ENCODE measurements at regions of chr14 and their contacts with region 1.

Region 1: DNA sequence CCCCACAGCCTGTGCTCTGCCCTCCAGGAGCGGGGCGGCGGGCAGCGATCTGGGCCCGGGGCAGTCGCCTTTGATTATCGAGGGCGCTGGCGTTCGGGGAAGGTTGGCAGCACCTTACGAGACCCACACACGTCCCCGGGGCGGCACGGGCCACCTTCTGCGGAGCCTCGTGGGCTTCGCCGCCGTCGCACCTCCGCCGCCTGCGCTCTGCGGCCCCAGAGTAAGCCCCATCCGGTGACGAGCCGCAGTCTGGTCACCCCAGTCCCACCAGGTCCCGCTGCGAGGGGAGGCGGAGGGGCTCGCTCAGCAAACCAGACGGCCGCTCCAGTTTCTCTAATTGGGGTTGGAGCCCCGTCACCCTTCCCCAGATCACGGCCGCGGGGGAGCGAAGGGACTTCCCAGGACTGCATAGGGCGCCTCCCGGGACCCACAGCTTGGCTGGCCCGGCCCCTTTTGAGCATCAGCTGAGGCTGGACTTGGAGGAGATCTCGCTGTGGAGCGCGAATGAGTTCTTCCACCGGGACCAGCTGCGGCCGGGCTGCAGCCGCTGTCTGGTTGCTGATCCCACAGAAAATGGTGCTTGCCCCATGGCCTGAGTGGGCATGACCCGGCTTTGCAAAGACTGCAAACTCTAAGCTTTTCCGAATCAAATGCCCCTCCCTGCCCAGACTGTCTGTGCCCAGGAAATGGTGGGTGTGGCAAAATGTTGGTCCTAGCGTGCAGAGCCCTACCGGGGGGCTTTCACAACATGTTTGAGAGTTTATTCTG is 560 bp downstream of the LGALS3 start:
- DNase-seq: peak; percentile 12
- H3K4me3 ChIP-seq: peak overlapping the region; percentile 73
- CTCF ChIP-seq: no peak

Region 2: GRCh38 chr14:55065411-55065810 is 64.2 kb before region 1 on chr14:
- in situ Hi-C with region 1: loop called (anchors 5 kb)
- DNase-seq: no peak
- H3K4me3 ChIP-seq: no peak overlapping the region
- CTCF ChIP-seq: no peak

Region 3: DNA sequence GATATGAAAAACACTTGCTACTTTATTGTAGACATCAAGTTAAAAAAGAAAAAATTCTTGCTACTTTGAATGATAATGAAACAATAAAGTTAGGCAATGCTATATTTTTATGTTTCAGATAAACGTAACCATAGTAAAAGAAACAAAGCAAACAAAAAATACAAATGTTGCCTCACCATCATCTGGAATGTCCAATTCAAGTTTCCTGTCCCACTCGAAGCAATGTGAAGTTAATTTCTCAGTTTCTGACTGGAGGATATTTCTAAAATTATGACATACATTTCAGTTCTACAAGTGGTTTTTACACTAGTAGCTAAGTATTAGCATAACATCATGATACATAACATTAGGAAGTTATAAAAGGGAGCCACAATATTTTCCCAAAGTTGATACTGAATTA is 40.9 kb after region 1 on chr14:
- in situ Hi-C with region 1: no loop called
- DNase-seq: no peak
- H3K4me3 ChIP-seq: no peak overlapping the region
- CTCF ChIP-seq: no peak

Region 4: DNA sequence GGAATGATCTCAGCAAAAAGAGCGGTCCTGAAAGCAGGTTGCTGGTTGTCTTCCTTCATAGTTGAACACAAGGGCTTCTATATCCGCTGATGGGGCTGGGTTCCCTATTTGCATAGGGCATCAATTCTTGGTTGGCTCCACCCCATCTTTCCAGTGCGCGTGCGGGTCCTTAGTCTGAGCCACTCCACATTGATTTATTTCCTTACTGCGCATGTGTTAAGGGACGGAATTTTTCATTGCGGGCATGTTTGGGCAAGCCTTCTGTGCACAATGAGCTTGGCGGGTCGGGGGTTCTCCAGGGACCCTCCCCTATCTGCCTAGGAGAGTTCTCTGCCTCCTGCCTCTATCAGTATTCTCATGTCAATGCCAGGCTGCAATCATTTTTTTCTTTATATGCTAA is 83.0 kb after region 1 on chr14:
- in situ Hi-C with region 1: no loop called
- DNase-seq: no peak
- H3K4me3 ChIP-seq: no peak overlapping the region
- CTCF ChIP-seq: no peak

Measured in astrocyte of the cerebellum (primary cell).